ENCODE measurements at regions of chr4 and their contacts with region 1.

Region 1: DNA sequence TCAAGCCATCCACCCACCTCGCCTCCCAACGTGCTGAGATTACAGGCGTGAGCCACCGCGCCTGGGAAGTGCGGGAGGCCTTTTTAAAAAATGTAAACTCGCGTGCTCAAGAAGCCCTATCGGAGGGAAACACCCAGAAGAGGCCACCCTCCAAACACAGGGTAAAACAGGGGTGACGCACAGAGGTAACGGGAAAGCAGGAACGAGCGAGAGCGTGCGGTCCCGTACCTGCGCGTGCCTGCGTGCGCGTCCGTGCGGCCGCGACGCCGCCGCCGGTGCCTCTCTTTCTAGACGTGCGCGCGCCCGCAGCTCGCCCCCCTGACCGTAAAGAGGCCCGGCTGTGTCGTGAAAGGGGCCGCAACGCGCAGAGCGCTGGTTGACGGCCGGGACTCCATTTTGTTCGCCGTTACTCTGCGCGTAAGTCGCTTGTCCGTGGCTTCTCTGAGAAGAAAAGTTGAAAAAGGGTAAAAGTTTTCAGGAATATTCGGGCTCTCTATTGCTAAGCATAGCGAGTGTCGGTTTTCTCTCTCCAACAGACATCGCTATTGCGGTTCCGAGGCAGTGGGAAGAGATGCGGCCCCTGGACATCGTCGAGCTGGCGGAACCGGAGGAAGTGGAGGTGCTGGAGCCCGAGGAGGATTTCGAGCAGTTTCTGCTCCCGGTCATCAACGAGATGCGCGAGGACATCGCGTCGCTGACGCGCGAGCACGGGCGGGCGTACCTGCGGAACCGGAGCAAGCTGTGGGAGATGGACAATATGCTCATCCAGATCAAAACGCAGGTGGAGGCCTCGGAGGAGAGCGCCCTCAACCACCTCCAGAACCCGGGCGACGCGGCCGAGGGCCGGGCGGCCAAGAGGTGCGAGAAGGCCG is at the start of gene MRFAP1:
- DNase-seq: peak; percentile 92
- H3K4me3 Mint-ChIP-seq: peak within 1 kb of the TSS; percentile 95
- H3K27ac Mint-ChIP-seq: peak within 1 kb of the TSS; percentile 98
- H3K4me1 Mint-ChIP-seq: peaks cover 24% of the 10 kb centered on the region
- H3K27me3 Mint-ChIP-seq: peaks cover 1% of the 10 kb centered on the region
- total RNA-seq, gene MRFAP1: 115 and 119 TPM in 2 replicates

Region 2: DNA sequence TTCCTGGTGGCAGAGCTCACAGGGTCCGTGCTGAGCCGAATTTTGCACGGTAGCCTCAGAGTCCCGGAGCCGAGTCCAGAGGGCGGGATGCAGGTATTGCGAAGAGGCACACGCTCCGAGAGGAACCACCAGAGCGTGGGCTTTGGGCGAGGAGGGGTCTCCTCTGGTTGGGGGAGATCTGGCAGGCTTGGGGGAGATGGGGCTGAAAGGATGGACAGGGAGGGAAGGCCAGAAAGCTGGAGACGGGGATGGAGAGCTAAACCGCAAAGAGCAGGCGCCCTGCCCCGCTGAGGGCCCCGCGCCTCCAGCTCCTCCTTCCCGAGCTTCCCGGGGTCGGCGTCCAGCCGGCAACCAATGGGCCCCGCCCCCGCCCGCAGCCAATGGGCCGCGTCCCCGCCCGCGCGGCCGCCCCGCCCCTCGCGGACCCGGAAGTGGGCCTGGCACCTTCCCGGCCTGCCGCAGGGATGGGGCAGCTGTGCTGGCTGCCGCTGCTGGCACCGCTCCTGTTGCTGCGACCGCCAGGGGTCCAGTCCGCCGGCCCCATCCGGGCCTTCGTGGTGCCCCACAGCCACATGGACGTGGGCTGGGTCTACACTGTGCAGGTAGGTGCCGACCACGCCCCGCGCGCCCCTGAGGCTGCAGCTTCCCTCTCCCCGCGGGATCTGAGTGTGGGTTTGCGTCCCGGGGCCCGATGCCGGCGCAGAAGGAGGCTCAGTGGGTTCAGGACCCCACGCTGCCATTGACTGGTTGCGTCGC is 65.6 kb before region 1 on chr4 and contains the start of gene MAN2B2:
- intact Hi-C with region 1: loop called (anchors 1 kb)
- DNase-seq: peak; percentile 83
- H3K4me3 Mint-ChIP-seq: peak within 1 kb of the TSS; percentile 87
- H3K27ac Mint-ChIP-seq: peak within 1 kb of the TSS; percentile 71
- H3K4me1 Mint-ChIP-seq: no peaks in the 10 kb centered on the region
- H3K27me3 Mint-ChIP-seq: peaks cover 5% of the 10 kb centered on the region
- total RNA-seq, gene MAN2B2: 13.9 and 14.0 TPM in 2 replicates

Region 3: DNA sequence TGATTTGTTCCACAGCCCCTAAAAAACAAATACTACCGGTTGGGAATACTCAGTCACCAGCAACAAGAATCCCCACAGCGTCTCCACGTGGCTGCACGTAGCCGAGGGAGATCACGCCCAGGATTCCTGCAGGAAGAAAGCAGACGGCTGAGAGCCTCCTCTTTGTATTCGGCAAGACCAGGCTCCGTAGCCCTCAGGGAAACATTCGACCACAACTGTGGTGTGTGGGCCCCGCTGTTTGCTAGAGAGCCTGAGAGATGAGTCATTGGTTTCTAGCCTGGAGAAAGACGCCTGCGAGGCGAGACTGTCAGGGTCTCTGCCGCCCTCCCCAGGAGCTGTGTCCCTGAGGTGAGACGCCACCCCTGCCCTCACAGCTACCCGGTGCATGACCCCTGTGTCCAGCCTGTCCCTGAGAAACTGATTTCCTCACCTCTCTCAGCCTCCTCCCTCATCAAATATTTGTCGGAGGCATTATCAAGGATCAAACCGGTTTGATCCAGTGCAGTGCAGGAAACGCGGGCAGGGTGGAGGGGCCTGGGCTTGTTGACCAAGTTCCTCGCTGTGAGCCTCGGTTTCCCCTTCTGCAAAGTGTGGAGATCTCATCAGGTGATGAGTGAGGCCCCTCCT is 48.5 kb after region 1 on chr4:
- intact Hi-C with region 1: loop called (anchors 1 kb)
- DNase-seq: peak; percentile 70
- H3K4me3 Mint-ChIP-seq: peak overlapping the region; percentile 83
- H3K27ac Mint-ChIP-seq: peak overlapping the region; percentile 96
- H3K4me1 Mint-ChIP-seq: peaks cover 80% of the 10 kb centered on the region
- H3K27me3 Mint-ChIP-seq: no peaks in the 10 kb centered on the region

Region 4: DNA sequence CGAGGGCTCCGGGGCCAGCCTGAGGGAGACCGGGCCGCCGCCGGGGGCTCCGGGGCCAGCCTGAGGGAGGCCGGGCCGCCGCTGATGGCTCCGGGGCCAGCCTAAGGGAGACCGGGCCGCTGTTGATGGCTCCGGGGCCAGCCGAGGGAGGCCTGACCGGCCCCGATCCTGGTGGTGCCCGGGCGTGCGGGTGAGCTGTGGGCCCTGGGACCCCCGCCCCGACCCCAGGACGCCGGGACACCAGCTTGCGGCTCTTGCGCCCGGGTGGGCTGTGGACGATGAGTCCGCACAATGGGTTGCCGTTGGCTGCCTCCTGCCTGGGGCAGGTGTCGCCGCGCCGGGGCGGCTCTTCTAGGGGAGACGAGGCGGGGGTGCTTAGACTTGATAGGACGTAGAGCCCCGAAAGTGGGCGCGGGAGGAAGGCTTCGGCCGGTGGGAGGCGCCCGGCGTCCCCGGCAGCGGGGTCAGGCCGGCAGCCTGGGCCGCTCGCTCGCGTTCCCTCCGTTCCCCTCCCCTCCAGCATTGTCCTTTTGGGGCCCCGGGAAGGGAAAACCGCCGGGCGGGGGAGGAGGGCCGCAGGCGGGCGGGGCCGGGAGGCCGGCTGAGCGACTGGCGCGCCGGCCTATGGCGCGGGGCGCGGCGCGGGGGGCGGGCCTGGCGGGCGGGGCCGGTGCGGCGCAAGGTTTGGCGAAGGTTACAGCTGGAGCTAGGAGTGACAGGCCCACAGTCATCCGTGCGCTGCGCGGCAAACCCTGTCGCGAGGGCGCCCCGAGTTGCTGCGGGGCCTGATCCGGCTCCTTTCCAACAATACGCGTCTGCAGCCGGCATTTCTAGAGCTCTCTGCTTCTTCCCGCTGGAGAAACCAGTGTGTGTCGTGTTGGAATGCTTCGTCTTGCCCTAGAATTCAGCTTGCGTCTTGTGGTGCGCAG is 142.8 kb after region 1 on chr4:
- intact Hi-C with region 1: loop called (anchors 1 kb)
- DNase-seq: peak; percentile 86
- H3K4me3 Mint-ChIP-seq: peak overlapping the region; percentile 85
- H3K27ac Mint-ChIP-seq: peak overlapping the region; percentile 86
- H3K4me1 Mint-ChIP-seq: peaks cover 57% of the 10 kb centered on the region
- H3K27me3 Mint-ChIP-seq: no peaks in the 10 kb centered on the region

Region 5: GRCh38 chr4:7042697-7043464 is 402.4 kb after region 1 on chr4 and contains the start of gene TADA2B:
- intact Hi-C with region 1: loop called (anchors 1 kb)
- DNase-seq: peak; percentile 93
- H3K4me3 Mint-ChIP-seq: peak within 1 kb of the TSS; percentile 95
- H3K27ac Mint-ChIP-seq: peak within 1 kb of the TSS; percentile 86
- H3K4me1 Mint-ChIP-seq: peaks cover 48% of the 10 kb centered on the region
- H3K27me3 Mint-ChIP-seq: peaks cover 8% of the 10 kb centered on the region
- total RNA-seq, gene TADA2B: 15.2 and 16.8 TPM in 2 replicates